OCI-LY7 (cell line): ENCODE measurements at regions of chr20 and their contacts with region 1.

Region 1: GRCh38 chr20:25692499-25692898 is 4.2 kb downstream of the ZNF337 start:
- DNase-seq: no peak
- H3K4me3 ChIP-seq: no peak overlapping the region
- H3K27ac ChIP-seq: no peak overlapping the region
- H3K4me1 ChIP-seq: peaks cover 13% of the 10 kb centered on the region
- CTCF ChIP-seq: no peak

Region 2: DNA sequence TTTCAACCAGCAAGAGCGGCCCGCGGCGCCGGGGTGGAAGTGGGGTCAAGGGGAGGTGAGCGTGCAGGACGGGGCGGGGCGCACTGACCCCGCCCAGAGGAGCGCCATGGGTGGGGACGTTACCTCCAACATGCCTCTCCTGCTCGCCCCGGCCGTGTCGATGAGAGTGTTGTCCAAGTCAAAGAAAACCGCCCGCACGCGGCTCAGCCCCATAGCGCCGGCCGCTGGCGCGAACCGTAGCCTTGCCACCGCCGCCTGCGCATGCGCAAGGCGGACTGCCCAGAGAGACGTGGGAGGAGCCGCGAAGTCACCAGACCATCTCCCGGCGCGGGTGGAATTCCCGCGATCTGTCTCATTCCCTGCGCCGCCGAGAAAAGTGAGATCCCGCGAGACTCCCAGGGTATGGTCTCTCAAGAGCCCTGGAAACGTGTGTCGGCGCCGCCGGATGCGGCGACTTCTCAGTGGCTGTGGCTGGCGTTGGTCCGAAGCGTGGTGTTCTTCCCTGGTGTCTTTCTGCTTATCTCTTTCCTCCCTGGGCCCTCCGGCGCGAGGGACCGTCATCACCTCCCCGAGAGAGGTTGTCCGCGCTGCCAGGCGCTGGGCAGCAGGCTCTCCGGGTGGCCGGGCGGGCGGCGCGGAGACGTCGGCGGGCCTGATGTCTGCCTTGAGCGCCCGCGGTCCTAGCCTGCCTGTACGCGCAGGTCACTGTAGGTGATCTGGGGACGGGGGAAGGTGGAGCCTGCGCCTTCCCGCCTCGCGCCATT is 68.6 kb before region 1 on chr20 and contains the start of gene NANP:
- CTCF ChIA-PET with region 1: no interaction called
- POLR2A ChIA-PET with region 1: interaction called, 3 read pairs
- intact Hi-C with region 1: loop called (anchors 5 kb)
- DNase-seq: peak; percentile 79
- H3K4me3 ChIP-seq: peak within 1 kb of the TSS; percentile 81
- H3K27ac ChIP-seq: peak within 1 kb of the TSS; percentile 36
- H3K4me1 ChIP-seq: peaks cover 14% of the 10 kb centered on the region
- CTCF ChIP-seq: no peak
- total RNA-seq, gene NANP: 1.0 and 1.2 TPM in 2 replicates

Region 3: DNA sequence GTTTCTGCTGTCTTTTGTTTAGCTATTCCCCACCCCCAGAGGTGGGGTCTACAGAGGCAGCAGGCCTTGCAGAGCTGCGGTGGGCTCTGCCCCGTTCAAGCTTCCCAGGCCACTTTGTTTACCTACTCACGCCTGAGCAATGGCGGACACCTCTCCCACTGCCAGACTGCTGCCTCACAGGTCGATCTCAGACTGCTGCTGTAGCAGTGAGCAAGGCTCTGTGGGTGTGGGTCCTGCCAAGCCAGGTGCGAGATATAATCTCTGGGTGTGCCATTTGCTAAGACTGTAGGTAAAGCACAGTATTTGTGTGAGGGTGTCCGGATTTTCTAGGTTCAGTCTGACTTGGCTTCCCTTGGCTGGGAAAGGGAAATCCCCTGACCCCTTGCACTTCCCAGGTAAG is 27.8 kb after region 1 on chr20:
- CTCF ChIA-PET with region 1: no interaction called
- POLR2A ChIA-PET with region 1: no interaction called
- intact Hi-C with region 1: no loop called
- DNase-seq: no peak
- H3K4me3 ChIP-seq: no peak overlapping the region
- H3K27ac ChIP-seq: no peak overlapping the region
- H3K4me1 ChIP-seq: no peaks in the 10 kb centered on the region
- CTCF ChIP-seq: no peak